ENCODE measurements at regions of chr13 and their contacts with region 1.

Region 1: DNA sequence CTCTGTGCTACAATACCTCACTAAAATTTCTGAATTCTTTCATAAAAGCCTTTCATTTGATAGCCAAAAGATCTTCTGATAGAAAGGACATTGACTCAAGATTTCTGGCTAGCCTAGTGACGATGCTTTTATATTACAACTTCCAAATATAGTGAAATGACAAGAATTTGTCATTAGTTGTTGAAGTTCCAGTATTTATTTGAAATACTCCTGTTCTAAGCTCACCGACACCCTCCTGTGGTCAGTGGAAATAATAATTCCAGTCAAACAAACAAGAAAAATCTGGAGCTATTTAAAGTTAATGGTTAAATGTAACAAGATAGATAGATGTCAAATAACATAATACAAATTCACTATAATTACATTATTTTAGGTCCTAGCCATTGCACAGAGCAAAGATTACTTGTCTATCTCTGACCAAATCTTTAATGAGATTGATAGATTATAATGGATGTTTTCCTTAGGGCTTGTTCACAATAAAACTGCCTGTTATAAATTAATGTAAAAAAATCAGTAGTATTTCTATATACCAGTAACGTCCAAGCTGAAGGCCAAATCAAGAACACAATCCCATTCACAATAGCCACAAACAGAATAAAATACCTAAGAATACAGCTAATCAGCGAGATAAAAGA is 195.5 kb downstream of the RGCC start:
- DNase-seq: peak; percentile 45 to 54 (median 50)
- H3K4me3 ChIP-seq: no peak overlapping the region
- H3K4me3 Mint-ChIP-seq: no peak overlapping the region
- H3K27ac ChIP-seq: no peak overlapping the region
- H3K27ac Mint-ChIP-seq: peak overlapping the region in 3 of 7 donors; percentile 19 to 86 (median 43)
- H3K4me1 ChIP-seq: no peaks in the 10 kb centered on the region
- H3K4me1 Mint-ChIP-seq: peaks cover 4 to 9% (median 7%) of the 10 kb centered on the region in 4 donors
- H3K27me3 ChIP-seq: no peaks in the 10 kb centered on the region
- H3K27me3 Mint-ChIP-seq: no peaks in the 10 kb centered on the region

Region 2: DNA sequence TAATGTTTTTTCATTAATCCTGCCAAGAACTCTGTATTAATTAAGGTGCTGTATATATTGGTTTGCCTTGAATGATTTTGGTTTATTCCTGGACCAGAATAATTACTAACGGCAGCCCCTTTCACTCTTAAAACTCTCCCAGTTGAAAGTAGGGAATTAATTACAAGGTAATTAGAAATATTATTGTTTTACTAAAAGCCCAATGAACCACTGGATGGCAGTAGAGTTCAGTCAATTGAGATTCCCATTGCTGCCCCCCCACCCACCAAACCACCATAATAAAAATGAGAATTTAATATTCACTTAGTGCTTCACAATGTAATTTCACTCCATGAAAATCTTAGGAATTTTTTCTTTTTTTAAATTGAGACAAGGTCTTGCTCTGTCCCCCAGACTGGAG is 577.8 kb before region 1 on chr13:
- CTCF ChIA-PET with region 1: interaction called, 3 read pairs
- POLR2A ChIA-PET with region 1: no interaction called
- intact Hi-C with region 1: loop called (anchors 1 kb)
- DNase-seq: peak in 4 of 5 donors; percentile 37 to 52 (median 44)
- H3K4me3 ChIP-seq: no peak overlapping the region
- H3K4me3 Mint-ChIP-seq: no peak overlapping the region
- H3K27ac ChIP-seq: no peak overlapping the region
- H3K27ac Mint-ChIP-seq: no peak overlapping the region
- H3K4me1 ChIP-seq: no peaks in the 10 kb centered on the region
- H3K4me1 Mint-ChIP-seq: no peaks in the 10 kb centered on the region
- H3K27me3 ChIP-seq: no peaks in the 10 kb centered on the region
- H3K27me3 Mint-ChIP-seq: no peaks in the 10 kb centered on the region

Region 3: GRCh38 chr13:41411522-41411921 is 241.3 kb before region 1 on chr13:
- CTCF ChIA-PET with region 1: interaction called, 43 read pairs
- POLR2A ChIA-PET with region 1: no interaction called
- intact Hi-C with region 1: loop called (anchors 1 kb)
- DNase-seq: peak in 4 of 5 donors; percentile 29 to 42 (median 34)
- H3K4me3 ChIP-seq: no peak overlapping the region
- H3K4me3 Mint-ChIP-seq: peak overlapping the region in 1 of 8 donors; percentile 14
- H3K27ac ChIP-seq: no peak overlapping the region
- H3K27ac Mint-ChIP-seq: peak overlapping the region in 3 of 7 donors; percentile 25 to 80 (median 70)
- H3K4me1 ChIP-seq: no peaks in the 10 kb centered on the region
- H3K4me1 Mint-ChIP-seq: peaks cover 0 to 7% (median under 1%) of the 10 kb centered on the region in 4 donors
- H3K27me3 ChIP-seq: no peaks in the 10 kb centered on the region
- H3K27me3 Mint-ChIP-seq: no peaks in the 10 kb centered on the region

Region 4: DNA sequence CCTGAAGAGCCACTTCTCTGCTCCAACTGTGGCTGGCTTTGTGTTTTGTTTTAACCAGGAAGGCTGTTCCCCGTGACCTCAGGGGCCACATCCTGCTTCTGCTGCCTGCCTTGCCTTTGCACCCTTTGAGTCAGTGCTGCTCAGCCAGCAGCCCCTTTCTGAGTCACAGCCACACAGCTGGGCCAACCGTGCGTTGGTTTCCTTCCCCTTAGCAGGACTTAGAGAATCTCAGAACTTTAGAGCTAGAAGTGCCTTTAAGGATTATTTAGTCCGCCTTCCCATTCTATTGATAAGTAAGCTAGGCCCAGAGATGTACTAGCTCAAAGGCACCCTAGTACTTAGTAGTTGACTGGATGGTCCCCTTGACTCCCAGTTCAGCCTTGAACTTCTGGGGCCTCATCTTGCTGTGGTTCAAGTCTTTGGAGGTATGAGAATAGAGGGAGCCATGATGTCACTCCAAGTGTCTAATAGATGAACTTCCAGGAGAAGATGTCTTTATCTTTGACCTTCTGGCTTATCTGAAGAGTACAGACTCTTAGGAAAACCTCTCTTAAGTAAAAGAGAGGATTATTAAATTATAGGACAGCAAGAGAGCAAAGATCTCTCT is 187.5 kb before region 1 on chr13:
- CTCF ChIA-PET with region 1: interaction called, 82 read pairs
- POLR2A ChIA-PET with region 1: interaction called, 19 read pairs
- intact Hi-C with region 1: no loop called
- DNase-seq: peak; percentile 88 to 96 (median 90)
- H3K4me3 ChIP-seq: peak overlapping the region; percentile 11 to 52
- H3K4me3 Mint-ChIP-seq: peak overlapping the region; percentile 88 to 94 (median 92)
- H3K27ac ChIP-seq: peak overlapping the region; percentile 88
- H3K27ac Mint-ChIP-seq: peak overlapping the region; percentile 97 to 100 (median 99)
- H3K4me1 ChIP-seq: peaks cover 93% of the 10 kb centered on the region
- H3K4me1 Mint-ChIP-seq: peaks cover 75 to 98% (median 85%) of the 10 kb centered on the region in 4 donors
- H3K27me3 ChIP-seq: no peaks in the 10 kb centered on the region
- H3K27me3 Mint-ChIP-seq: peaks cover 0 to 3% of the 10 kb centered on the region in 2 donors

Region 5: DNA sequence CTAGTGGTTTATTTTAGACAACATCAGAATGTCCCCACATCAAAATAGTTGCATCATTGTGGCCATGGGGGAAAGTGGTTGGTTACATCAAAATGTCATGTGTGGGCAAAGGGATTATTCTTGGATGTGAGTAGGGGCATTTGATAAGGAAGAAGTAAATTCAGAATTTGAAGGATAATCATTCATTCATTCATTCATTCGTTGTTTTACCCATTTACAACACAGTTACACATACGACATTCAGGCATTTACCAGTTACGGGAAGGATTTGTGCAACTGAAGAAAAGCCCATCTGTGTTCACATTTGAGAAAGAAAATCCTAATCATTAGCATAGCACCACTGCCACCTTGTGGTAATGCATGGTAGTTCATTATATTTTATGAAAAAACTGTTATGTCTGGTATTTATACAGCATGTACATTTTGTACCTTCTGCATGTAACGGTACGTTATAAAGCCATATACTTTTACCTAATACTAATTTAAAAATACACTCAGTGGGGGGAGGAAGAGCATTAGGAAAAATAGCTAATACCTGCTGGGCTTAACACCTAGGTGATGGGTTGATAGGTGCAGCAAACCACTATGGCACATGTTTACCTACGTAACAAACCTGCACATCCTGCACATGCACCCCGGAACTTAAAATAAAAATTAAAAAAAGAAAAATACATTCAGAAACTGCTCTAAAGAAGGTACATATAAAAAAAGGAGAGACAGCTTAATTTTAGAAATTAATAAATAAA is 457.7 kb after region 1 on chr13:
- CTCF ChIA-PET with region 1: interaction called, 3 read pairs
- POLR2A ChIA-PET with region 1: no interaction called
- intact Hi-C with region 1: loop called (anchors 1 kb)
- DNase-seq: peak in 4 of 5 donors; percentile 63 to 68 (median 64)
- H3K4me3 ChIP-seq: no peak overlapping the region
- H3K4me3 Mint-ChIP-seq: peak overlapping the region in 1 of 8 donors; percentile 5
- H3K27ac ChIP-seq: no peak overlapping the region
- H3K27ac Mint-ChIP-seq: peak overlapping the region in 1 of 7 donors; percentile 24
- H3K4me1 ChIP-seq: peaks cover 6% of the 10 kb centered on the region
- H3K4me1 Mint-ChIP-seq: peaks cover 7 to 8% (median 7%) of the 10 kb centered on the region in 4 donors
- H3K27me3 ChIP-seq: no peaks in the 10 kb centered on the region
- H3K27me3 Mint-ChIP-seq: no peaks in the 10 kb centered on the region

Region 6: GRCh38 chr13:42377640-42378382 is 725.0 kb after region 1 on chr13:
- CTCF ChIA-PET with region 1: no interaction called
- POLR2A ChIA-PET with region 1: no interaction called
- intact Hi-C with region 1: no loop called
- DNase-seq: peak in 4 of 5 donors; percentile 22 to 65 (median 36)
- H3K4me3 ChIP-seq: no peak overlapping the region
- H3K4me3 Mint-ChIP-seq: peak overlapping the region in 5 of 8 donors; percentile 20 to 60 (median 35)
- H3K27ac ChIP-seq: peak overlapping the region; percentile 17
- H3K27ac Mint-ChIP-seq: peak overlapping the region; percentile 66 to 88 (median 77)
- H3K4me1 ChIP-seq: peaks cover 27% of the 10 kb centered on the region
- H3K4me1 Mint-ChIP-seq: peaks cover 17 to 38% (median 25%) of the 10 kb centered on the region in 4 donors
- H3K27me3 ChIP-seq: no peaks in the 10 kb centered on the region
- H3K27me3 Mint-ChIP-seq: no peaks in the 10 kb centered on the region

Measured in CD4-positive, alpha-beta memory T cell (primary cell).